GM10248 (cell line): ENCODE measurements at regions of chr11 and their contacts with region 1.

Region 1: GRCh38 chr11:103108933-103109817 is at the start of gene DYNC2H1:
- DNase-seq: peak; percentile 92
- CTCF ChIP-seq: peak; percentile 62

Region 2: DNA sequence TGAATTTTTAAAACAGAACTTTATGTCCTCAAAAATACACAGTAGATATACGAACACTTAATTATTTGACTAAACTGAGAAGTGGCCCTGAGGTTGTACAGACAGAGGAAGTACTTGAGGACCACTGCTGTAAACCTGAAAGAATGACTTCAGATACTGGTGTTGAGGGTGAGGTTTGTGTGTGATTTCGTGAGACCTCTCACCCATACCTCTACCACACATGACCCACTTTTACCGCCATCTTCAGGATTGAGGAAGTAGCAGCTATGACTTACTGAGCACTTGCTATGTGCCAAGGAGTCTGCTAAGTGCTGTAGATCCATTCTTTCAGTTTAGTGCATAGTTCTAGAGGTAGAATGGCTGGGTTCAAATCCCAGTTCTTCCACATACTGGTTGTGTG is 175.5 kb before region 1 on chr11:
- CTCF ChIA-PET with region 1: no interaction called
- POLR2A ChIA-PET with region 1: no interaction called
- DNase-seq: no peak
- CTCF ChIP-seq: no peak

Region 3: DNA sequence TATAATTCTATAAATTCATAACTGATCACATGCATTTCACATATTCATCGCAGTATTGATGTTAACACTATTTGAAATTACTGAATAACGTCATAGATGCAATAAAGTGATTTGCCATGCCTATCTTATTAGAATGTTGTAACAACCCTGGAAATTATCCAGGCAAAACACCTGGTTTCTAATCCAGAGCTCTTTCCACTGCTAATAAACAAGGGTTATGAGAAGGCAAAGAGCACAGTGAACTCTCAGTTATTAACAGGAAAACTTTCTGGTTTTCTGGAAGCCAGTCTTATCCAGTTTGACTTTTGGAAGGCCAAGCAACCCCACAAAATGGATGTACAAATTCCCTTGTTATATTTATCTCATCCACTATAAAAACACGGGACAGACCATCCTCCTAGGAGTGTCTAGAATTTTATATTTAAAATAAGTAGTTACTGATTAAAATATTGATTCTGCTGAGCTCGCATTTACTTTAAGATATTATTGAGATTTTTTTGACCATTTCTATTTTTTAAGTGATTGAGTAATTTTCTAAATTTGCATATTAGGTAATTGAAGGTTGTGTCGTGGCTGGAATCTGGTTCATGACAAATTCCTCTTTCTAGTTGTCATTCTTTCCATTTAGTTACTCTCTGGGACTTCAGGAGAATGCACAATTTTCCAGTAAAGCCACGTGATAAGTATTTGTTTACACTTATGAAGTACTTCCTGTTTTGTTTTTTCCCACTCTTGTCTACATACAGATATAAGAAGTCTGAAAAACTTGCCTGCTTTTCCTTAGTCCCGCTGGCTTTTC is 65.2 kb before region 1 on chr11:
- CTCF ChIA-PET with region 1: no interaction called
- POLR2A ChIA-PET with region 1: no interaction called
- DNase-seq: no peak
- CTCF ChIP-seq: no peak

Region 4: GRCh38 chr11:103085758-103086365 is 23.3 kb before region 1 on chr11:
- CTCF ChIA-PET with region 1: interaction called, 27 read pairs
- POLR2A ChIA-PET with region 1: no interaction called
- DNase-seq: no peak
- CTCF ChIP-seq: no peak

Region 5: GRCh38 chr11:103091801-103092524 is 17.2 kb before region 1 on chr11 and contains the start of gene DCUN1D5:
- CTCF ChIA-PET with region 1: interaction called, 27 read pairs
- POLR2A ChIA-PET with region 1: interaction called, 5 read pairs
- DNase-seq: peak; percentile 96
- CTCF ChIP-seq: no peak

Region 6: DNA sequence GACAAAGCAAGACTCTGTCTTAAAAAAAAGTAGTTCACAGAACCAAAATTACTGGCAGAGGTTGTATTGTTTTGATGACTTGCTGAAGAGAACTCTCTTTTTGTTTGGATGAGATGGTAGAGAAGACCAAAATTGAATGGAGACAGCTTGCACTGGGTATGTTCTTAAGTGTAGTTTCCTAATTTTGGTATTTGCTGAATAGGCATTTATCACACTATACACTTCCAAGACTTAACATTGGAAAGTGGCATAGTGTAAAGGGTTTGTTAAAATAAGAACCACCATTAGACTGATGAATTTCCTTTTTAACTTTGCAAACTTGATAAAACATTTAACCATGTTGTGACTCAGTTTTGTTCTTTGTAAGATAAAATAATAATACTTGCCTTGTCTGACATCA is 11.9 kb before region 1 on chr11:
- CTCF ChIA-PET with region 1: interaction called, 28 read pairs
- POLR2A ChIA-PET with region 1: interaction called, 5 read pairs
- DNase-seq: no peak
- CTCF ChIP-seq: no peak

Region 7: DNA sequence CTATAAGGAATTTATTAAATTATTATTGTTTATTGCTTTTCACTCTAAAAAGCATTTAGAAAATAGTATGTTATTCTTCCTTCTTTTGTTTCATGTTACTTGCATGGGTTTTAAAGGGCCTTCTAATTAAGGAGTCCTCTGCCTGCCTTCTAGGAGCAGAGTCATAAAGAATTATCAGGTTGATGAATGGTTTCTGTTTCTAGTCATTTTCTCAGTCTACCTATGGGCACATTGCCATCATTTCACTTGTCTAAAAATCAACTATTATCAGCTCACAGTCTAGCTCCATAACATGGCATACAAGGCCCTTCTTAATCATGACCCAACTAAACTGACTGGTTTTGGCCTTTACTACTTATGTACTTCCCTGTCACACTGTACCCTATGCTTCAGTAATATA is 16.3 kb after region 1 on chr11:
- CTCF ChIA-PET with region 1: interaction called, 10 read pairs
- POLR2A ChIA-PET with region 1: no interaction called
- DNase-seq: no peak
- CTCF ChIP-seq: no peak